ENCODE measurements at regions of chr2 and their contacts with region 1.

Region 1: DNA sequence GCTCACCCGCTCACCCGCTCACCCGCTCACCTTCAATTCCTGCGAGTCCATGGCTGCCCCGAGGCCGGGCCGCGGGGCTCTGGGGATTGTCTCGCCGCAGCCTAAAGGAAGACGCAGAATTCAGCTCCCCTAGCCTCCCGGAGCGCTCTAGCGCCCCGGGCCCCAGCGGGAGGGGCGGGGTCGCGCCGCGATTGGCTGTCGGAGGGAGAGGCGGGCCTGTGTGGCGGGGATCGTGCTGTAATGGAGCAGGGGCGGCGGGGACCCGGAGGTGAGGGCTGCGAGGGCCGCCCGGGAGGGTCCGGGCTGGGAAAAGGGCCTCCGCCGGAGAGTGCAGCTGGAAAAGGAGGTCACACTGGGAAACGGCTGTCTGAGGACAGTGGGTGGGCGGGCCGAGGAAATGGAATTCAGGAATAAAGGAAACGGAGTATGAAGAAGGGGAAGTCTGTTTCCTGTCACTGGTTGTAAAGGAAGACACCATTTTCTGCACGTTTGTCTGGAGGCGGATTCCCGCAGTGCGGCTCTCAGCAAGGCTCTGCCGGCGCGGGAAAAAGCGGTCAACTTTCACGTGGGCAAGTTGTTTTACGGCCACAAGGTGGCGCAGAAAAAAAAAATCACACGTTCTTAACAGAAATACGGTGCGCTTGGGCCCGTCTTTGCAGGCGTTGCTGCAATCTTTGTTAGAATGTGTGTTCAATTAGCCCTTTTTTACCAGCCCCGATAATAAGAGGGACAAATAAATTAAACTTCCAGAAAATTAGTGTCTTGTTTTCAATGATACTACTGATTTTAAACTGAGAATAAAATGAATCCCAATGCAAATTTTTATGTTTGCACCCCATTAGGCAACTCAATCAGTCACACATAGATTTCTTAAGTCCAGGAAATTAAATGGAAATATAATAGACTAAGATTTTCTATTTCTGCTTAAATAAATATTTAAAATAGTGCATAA is at the start of gene TTC21B:
- DNase-seq: peak; percentile 98
- H3K4me3 ChIP-seq: peak within 1 kb of the TSS; percentile 40 to 83 (median 66)
- H3K27ac ChIP-seq: peak within 1 kb of the TSS; percentile 66 to 90 (median 86)
- H3K4me1 ChIP-seq: peaks cover 13 to 52% (median 40%) of the 10 kb centered on the region in 6 donors
- H3K27me3 ChIP-seq: no peaks in the 10 kb centered on the region
- CTCF ChIP-seq: peak; percentile 73 to 91 (median 88)
- POLR2A ChIP-seq: peak in 1 of 3 donors; percentile 55
- total RNA-seq, gene TTC21B: 20.2 to 42.2 (median 29.6) TPM

Region 2: DNA sequence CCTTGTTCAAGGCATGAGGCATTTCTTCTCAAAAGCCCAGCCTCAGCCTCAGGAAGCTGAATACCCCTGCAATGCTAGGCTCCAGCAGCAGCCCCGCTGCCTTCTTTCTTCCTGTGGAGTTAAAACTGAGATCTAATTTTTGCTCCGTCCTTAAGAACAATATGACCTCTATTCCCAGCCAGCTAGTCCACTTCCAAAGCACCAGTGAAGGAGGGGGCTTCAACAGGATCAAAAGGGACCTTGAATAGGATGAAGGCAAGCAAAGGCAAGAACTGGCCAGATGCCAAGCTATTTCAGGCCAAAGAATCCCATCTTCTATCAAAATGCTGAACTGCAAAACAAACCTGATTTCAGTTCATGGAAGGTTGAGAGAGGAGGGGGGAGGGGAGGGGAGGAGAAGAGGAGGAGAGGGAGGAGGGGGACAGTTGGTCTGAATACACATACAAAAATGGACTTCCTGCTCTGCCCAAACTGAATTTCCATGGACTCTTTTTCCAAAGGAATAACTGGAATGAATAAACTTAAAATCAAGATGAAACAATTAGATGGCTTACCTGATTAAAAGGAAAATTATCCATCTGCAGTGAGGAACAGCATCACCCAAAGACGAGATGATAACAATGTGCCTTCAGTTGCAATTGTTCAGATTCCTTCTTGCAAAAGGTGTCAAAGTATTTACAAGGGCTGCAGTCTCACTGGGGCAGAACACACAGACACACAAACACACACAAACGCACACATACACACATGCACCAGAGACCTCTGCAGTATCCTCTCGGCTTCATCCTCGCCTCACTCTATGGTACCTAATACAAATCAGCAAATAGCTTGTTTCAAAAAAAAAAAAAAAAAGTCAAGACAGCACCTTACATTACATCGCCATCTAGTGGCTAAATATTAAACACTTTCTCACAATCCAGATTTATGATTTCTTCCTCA is 173.6 kb after region 1 on chr2 and contains the start of gene SCN1A:
- intact Hi-C with region 1: loop called (anchors 5 kb)
- DNase-seq: no peak
- H3K4me3 ChIP-seq: no peak within 1 kb of the TSS
- H3K27ac ChIP-seq: no peak within 1 kb of the TSS
- H3K4me1 ChIP-seq: peaks cover 0 to 8% (median 1%) of the 10 kb centered on the region in 6 donors
- H3K27me3 ChIP-seq: peaks cover 0 to 27% (median 0%) of the 10 kb centered on the region in 7 donors
- CTCF ChIP-seq: peak in 10 of 11 experiments; percentile 36 to 73 (median 57)
- POLR2A ChIP-seq: no peak
- total RNA-seq, gene SCN1A: not detected